Posterior cingulate gyrus (tissue), 11 donors: ENCODE measurements at regions of chr7 and their contacts with region 1.

Region 1: DNA sequence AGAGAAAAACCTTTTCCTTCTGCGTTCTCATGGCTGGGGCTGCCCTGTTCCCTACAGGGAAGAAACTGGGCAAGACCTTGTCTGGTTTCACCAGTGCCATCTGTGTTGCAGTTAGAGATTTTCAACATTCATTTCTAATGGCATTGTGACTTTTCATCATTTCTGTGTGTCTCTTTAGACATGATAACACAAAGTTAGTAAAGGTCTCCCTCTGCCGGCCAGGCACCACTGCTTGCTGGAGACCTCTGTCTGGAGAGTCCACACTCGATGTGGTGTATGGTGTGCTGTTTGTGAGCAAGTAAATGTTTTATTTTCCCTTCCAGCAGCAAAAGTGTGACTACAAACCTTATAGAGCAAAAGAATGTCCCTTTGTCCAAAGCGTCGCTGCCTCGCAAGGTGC is 213.5 kb downstream of the PAXIP1 start:
- DNase-seq: peak; percentile 60 to 97 (median 85)

Region 2: GRCh38 chr7:154598864-154599263 is 190.5 kb before region 1 on chr7:
- intact Hi-C with region 1: no loop called
- DNase-seq: no peak

Region 3: GRCh38 chr7:154640266-154640865 is 149.0 kb before region 1 on chr7:
- intact Hi-C with region 1: loop called (anchors 1 kb)
- DNase-seq: peak in 8 of 10 donors; percentile 18 to 92 (median 55)

Region 4: GRCh38 chr7:154698726-154699291 is 90.6 kb before region 1 on chr7:
- intact Hi-C with region 1: loop called (anchors 5 kb)
- DNase-seq: no peak